ENCODE measurements at regions of chr14 and their contacts with region 1.

Region 1: DNA sequence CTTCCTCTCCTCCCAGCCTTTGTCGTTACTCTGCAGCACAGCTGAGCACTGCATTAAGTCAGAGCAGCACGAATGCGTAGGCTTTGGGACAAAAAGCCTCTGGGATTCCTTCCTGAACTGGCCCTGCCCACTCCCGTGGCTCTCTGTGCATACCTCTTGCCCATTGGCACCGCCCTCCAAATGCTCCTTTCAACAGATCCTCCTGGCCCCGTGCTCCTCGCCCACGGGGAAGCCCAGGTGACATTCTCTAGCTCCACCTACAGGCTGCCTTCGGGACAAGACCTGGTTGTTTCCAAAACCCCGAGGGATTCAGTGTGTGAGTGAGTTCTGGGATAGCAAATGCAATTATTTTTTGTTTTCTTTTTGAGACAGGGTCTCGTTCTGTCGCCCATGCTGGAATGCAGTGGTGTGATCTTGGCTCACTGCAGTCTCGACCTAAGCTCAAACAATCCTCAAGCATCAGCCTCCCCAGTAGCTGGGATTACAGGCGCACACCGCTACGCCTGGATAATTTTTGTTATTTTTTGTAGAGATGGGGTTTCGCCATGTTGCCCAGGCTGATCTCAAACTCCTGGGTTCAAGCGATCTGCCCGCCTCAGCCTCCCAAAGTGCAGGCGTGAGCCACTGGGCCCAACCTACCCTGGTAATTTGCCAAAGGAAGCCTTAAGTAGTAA is 17.9 kb upstream of the TDRD9 start:
- DNase-seq: peak; percentile 78
- H3K4me3 ChIP-seq: peak overlapping the region; percentile 42
- H3K27ac ChIP-seq: peak overlapping the region; percentile 78
- H3K4me1 ChIP-seq: peaks cover 13% of the 10 kb centered on the region
- H3K27me3 ChIP-seq: no peaks in the 10 kb centered on the region
- CTCF ChIP-seq: peak; percentile 87

Region 2: GRCh38 chr14:103808403-103809001 is 101.9 kb before region 1 on chr14:
- intact Hi-C with region 1: loop called (anchors 5 kb)
- DNase-seq: peak; percentile 71
- H3K4me3 ChIP-seq: no peak overlapping the region
- H3K27ac ChIP-seq: peak overlapping the region; percentile 31
- H3K4me1 ChIP-seq: peaks cover 75% of the 10 kb centered on the region
- H3K27me3 ChIP-seq: no peaks in the 10 kb centered on the region
- CTCF ChIP-seq: peak; percentile 94

Region 3: GRCh38 chr14:103819503-103820307 is 90.7 kb before region 1 on chr14:
- intact Hi-C with region 1: no loop called
- DNase-seq: peak; percentile 49
- H3K4me3 ChIP-seq: peak overlapping the region; percentile 26
- H3K27ac ChIP-seq: peak overlapping the region; percentile 83
- H3K4me1 ChIP-seq: peaks cover 84% of the 10 kb centered on the region
- H3K27me3 ChIP-seq: no peaks in the 10 kb centered on the region
- CTCF ChIP-seq: no peak

Measured in left ventricle myocardium inferior (tissue), 1 donor.